ENCODE measurements at regions of chrX and their contacts with region 1.

Region 1: GRCh38 chrX:41010188-41010846 is 74.9 kb upstream of the USP9X start:
- DNase-seq: peak; percentile 66 to 92 (median 72)
- ATAC-seq: peak; percentile 94
- H3K4me3 ChIP-seq: peak overlapping the region; percentile 36
- H3K27ac ChIP-seq: peak overlapping the region; percentile 84
- H3K4me1 ChIP-seq: peaks cover 16 to 20% of the 10 kb centered on the region in 2 experiments; a peak in 4 of 5 replicates
- H3K27me3 ChIP-seq: no peaks in the 10 kb centered on the region
- CTCF ChIP-seq: peak in 2 of 3 experiments; percentile 20 to 23; a peak in 2 of 6 replicates
- EP300 ChIP-seq: peak; percentile 58; the same call in 1 of the 2 replicates
- POLR2A ChIP-seq: peak; percentile 76
- RAD21 ChIP-seq: peak in 1 of 2 experiments; percentile 3; a peak in 1 of 4 replicates

Region 2: DNA sequence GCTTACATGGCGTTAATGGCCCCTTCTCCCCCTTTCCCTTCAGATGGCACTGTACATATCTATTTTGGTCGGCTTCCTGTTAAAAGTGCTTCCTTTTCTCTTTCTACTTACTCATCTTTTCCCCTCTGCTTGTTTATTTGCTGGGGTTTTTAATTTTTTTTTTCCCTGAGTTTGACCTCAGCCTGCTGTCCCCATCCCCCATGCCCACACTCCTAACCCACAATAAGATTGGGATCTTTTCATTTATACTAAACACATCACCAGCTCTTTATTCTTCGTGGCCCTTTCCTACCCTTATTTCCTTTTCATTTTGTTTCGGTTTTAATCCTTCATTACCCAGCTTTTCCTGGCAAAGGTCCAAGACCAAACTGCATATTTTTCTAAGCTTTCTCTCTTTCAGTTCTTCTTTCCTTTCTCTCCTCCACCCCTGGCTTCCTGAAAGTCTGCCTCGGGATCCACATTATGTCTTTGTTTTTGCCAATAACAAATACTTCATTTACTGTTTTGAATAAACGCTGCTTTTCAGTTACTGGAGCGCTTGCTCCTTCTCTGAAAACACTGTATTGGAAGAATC is 77.1 kb before region 1 on chrX:
- CTCF ChIA-PET with region 1: no interaction called
- POLR2A ChIA-PET with region 1: no interaction called
- in situ Hi-C with region 1: no loop called
- intact Hi-C with region 1: loop called (anchors 5 kb)
- DNase-seq: peak in 3 of 4 experiments; percentile 10 to 20 (median 11)
- ATAC-seq: no peak
- H3K4me3 ChIP-seq: peak overlapping the region; percentile 21; the same call in 1 of the 2 replicates
- H3K27ac ChIP-seq: peak overlapping the region; percentile 78
- H3K4me1 ChIP-seq: peaks cover 13 to 14% of the 10 kb centered on the region in 2 experiments; a peak in 4 of 5 replicates
- H3K27me3 ChIP-seq: no peaks in the 10 kb centered on the region
- CTCF ChIP-seq: no peak
- EP300 ChIP-seq: no peak
- POLR2A ChIP-seq: no peak
- RAD21 ChIP-seq: no peak

Region 3: DNA sequence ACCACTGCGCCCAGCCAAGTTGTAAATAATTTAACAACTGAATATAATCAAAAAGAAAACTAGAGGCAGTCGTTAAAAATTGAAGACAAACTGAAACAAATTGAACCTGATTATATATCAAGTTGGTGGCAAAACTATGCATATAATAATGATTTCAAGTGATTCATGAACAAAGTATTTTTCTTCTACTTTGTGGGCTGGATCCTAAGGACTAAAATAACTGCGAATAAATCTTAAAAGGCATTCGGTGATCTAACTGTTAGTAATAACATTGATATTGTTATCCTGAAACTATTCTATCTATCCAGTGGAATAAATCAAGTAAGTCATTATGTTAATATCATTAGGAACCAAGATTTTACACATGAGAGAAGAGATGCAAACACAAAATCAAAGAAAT is 53.7 kb after region 1 on chrX:
- CTCF ChIA-PET with region 1: no interaction called
- POLR2A ChIA-PET with region 1: no interaction called
- in situ Hi-C with region 1: no loop called
- intact Hi-C with region 1: no loop called
- DNase-seq: no peak
- ATAC-seq: no peak
- H3K4me3 ChIP-seq: no peak overlapping the region
- H3K27ac ChIP-seq: no peak overlapping the region
- H3K4me1 ChIP-seq: peaks cover 0 to 10% of the 10 kb centered on the region in 2 experiments; a peak in 2 of 5 replicates
- H3K27me3 ChIP-seq: no peaks in the 10 kb centered on the region
- CTCF ChIP-seq: no peak
- EP300 ChIP-seq: no peak
- POLR2A ChIP-seq: no peak
- RAD21 ChIP-seq: no peak

Region 4: GRCh38 chrX:41084044-41084892 is 74.0 kb after region 1 on chrX:
- CTCF ChIA-PET with region 1: no interaction called
- POLR2A ChIA-PET with region 1: no interaction called
- in situ Hi-C with region 1: no loop called
- intact Hi-C with region 1: loop called (anchors 5 kb)
- DNase-seq: peak; percentile 85 to 97 (median 88)
- ATAC-seq: peak; percentile 69
- H3K4me3 ChIP-seq: peak overlapping the region; percentile 90
- H3K27ac ChIP-seq: peak overlapping the region; percentile 100
- H3K4me1 ChIP-seq: peaks cover 12 to 14% of the 10 kb centered on the region in 2 experiments; a peak in 4 of 5 replicates
- H3K27me3 ChIP-seq: no peaks in the 10 kb centered on the region
- CTCF ChIP-seq: no peak
- EP300 ChIP-seq: peak; percentile 85
- POLR2A ChIP-seq: peak; percentile 86
- RAD21 ChIP-seq: peak in 1 of 2 experiments; percentile 8; a peak in 1 of 4 replicates

Region 5: DNA sequence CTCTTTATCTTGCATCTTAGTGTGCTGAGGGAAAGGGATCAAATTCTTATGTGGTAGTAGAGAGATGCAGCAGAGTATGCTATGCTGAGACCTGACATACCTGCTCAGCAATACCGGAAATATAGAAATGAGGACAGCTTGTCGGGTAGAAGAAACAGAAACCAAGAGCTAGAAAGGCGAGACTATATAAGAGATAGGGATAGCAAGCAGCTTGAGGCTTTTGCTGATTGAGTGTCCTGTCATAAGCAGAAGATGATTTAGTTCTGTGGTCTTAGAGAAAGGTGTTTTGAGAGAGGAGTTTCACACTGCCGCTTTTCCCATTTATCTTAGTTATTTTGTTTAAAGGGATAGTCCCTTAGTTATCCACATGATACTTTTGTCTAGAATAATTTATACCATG is 106.6 kb after region 1 on chrX:
- CTCF ChIA-PET with region 1: no interaction called
- POLR2A ChIA-PET with region 1: no interaction called
- in situ Hi-C with region 1: no loop called
- intact Hi-C with region 1: loop called (anchors 1 kb)
- DNase-seq: peak in 2 of 4 experiments; percentile 10 to 22
- ATAC-seq: peak; percentile 59
- H3K4me3 ChIP-seq: no peak overlapping the region
- H3K27ac ChIP-seq: no peak overlapping the region
- H3K4me1 ChIP-seq: peaks cover 0 to 5% of the 10 kb centered on the region in 2 experiments; a peak in 2 of 5 replicates
- H3K27me3 ChIP-seq: no peaks in the 10 kb centered on the region
- CTCF ChIP-seq: no peak
- EP300 ChIP-seq: no peak
- POLR2A ChIP-seq: no peak
- RAD21 ChIP-seq: no peak

Measured in K562 (cell line).